Mammary epithelial cell (primary cell): ENCODE measurements at regions of chr1 and their contacts with region 1.

Region 1: GRCh38 chr1:78607334-78607927 is 12.8 kb upstream of the IFI44L start:
- DNase-seq: no peak
- H3K4me3 ChIP-seq: no peak overlapping the region
- H3K27ac ChIP-seq: no peak overlapping the region
- H3K4me1 ChIP-seq: no peaks in the 10 kb centered on the region
- H3K27me3 ChIP-seq: no peaks in the 10 kb centered on the region
- CTCF ChIP-seq: peak; percentile 44 to 56

Region 2: GRCh38 chr1:78126506-78126905 is 480.9 kb before region 1 on chr1:
- CTCF ChIA-PET with region 1: no interaction called
- dilution Hi-C with region 1: no loop called
- in situ Hi-C with region 1: loop called in 1 of 2 experiments (anchors 5 kb)
- intact Hi-C with region 1: loop called (anchors 1 kb)
- DNase-seq: no peak
- H3K4me3 ChIP-seq: no peak overlapping the region
- H3K27ac ChIP-seq: no peak overlapping the region
- H3K4me1 ChIP-seq: no peaks in the 10 kb centered on the region
- H3K27me3 ChIP-seq: no peaks in the 10 kb centered on the region
- CTCF ChIP-seq: no peak

Region 3: DNA sequence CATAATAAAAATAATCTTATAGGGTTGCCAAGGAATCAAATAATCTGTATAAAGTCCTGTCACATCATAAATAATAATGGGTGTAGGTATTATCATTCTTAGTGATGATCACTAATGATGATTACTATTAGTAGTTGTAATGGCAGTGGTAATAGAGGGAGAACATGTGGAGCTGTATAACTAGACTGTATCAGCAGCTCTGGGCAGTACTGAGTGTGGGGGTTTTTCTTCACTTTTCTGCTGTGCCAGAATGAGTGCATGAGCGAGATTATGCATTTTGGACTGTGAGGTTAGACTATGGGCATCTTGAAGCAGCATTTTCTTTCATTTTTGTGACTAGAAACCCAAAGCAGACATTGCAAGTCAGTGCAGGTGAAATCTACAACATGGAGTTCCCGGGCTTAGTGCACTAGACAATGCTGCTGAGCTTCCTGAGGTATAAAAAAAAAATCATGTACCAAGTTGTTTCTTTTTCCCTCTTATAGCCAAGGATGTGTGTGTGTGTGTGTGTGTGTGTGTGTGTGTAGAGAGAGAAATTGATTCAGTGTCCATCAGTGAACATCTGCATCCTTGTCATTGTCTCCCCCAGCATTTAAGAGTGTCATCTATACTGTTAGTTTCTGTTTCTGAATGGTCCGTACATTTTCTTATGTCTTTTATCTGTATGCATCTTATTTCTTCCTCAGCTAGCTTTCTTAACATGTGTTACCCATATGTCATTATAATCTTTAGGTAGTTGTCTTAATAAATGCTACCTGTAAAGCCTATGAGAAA is 475.1 kb before region 1 on chr1:
- CTCF ChIA-PET with region 1: no interaction called
- dilution Hi-C with region 1: no loop called
- in situ Hi-C with region 1: loop called in 1 of 2 experiments (anchors 5 kb)
- intact Hi-C with region 1: loop called (anchors 1 kb)
- DNase-seq: no peak
- H3K4me3 ChIP-seq: no peak overlapping the region
- H3K27ac ChIP-seq: no peak overlapping the region
- H3K4me1 ChIP-seq: no peaks in the 10 kb centered on the region
- H3K27me3 ChIP-seq: no peaks in the 10 kb centered on the region
- CTCF ChIP-seq: no peak

Region 4: DNA sequence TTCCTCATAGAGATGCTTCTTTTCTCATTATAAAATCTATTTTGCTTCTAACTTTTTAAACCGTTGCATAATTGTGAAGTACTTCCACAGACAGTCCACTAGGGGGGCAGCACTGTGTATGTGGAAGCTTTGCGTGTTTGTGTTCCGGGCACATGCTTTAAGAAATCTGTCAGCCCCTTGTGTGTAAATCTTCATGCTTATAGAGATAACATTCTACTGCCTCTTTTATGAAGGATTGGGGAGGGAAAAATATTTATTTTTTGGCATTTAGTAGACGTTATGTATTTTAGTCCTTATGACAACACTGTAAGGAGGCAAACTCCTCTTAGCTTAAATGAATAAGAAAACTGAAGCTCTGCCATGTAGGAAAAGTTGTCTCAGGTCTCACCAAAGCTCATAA is 273.9 kb before region 1 on chr1:
- CTCF ChIA-PET with region 1: no interaction called
- dilution Hi-C with region 1: no loop called
- in situ Hi-C with region 1: no loop called
- intact Hi-C with region 1: loop called (anchors 5 kb)
- DNase-seq: peak; percentile 11
- H3K4me3 ChIP-seq: no peak overlapping the region
- H3K27ac ChIP-seq: no peak overlapping the region
- H3K4me1 ChIP-seq: peaks cover 3% of the 10 kb centered on the region
- H3K27me3 ChIP-seq: no peaks in the 10 kb centered on the region
- CTCF ChIP-seq: peak; percentile 76 to 91

Region 5: DNA sequence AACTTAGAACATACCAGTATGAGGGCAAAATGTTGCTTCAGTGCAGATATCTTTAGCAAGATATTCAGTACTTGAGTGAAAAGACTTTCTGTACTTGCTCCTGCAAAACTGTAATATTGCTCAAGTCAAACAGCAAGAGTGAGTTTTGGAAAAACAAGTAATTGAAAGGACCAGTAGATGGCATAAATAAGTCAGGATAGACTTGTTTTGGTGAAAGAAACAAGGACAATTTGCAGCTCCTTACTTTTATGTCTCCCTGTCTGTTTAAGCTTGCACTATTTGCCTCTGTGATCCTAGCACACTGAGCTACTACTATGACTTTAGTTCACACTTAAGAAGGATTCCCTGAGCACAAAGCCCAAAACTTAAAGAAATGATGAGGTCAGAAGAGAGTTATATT is 81.3 kb after region 1 on chr1:
- CTCF ChIA-PET with region 1: no interaction called
- dilution Hi-C with region 1: no loop called
- in situ Hi-C with region 1: no loop called
- intact Hi-C with region 1: no loop called
- DNase-seq: peak; percentile 29
- H3K4me3 ChIP-seq: no peak overlapping the region
- H3K27ac ChIP-seq: no peak overlapping the region
- H3K4me1 ChIP-seq: peaks cover 11% of the 10 kb centered on the region
- H3K27me3 ChIP-seq: no peaks in the 10 kb centered on the region
- CTCF ChIP-seq: peak in 1 of 2 donors; percentile 43